MCF 10A (cell line): ENCODE measurements at regions of chr11 and their contacts with region 1.

Region 1: DNA sequence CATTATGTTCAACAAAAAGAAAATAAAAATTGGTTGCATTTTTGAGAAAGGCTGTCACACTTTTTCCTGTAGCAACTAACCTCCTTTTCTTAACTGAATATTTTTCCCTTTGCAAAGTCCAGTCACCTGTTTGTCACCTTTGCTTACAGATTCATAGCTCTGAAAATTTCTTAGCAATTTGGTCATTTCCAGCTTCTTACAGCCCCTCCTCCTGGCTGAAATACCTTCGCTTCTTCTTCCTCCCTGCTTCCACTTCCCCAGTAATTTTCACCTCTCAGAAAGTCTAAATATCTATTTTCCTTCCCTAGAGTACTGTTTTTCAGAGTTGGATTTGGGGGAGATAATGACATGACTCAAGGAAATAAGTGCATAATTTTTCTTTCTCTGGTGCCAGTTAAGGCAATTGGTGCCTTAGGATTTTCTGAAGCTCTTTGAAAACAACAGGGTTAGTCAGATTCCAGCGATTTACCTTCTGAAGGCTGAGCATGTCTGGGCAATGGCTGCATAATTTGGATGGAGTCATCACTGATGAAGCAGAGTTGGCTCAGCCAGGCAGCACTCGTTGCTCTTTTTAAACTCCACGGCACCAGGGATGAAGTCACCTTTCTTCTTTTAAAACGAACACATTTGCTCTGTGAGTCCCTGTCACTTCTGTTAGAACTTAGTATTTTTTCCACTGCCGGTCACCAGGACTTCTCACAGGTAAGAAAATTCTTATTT is 62.1 kb upstream of the AMOTL1 start:
- DNase-seq: peak; percentile 83
- H3K4me3 Mint-ChIP-seq: peak overlapping the region; percentile 81
- H3K27ac Mint-ChIP-seq: peak overlapping the region; percentile 95
- H3K4me1 Mint-ChIP-seq: peaks cover 18% of the 10 kb centered on the region
- H3K27me3 Mint-ChIP-seq: no peaks in the 10 kb centered on the region
- CTCF ChIP-seq: no peak

Region 2: GRCh38 chr11:94649254-94649653 is 56.8 kb before region 1 on chr11:
- CTCF ChIA-PET with region 1: no interaction called
- POLR2A ChIA-PET with region 1: no interaction called
- intact Hi-C with region 1: no loop called
- DNase-seq: no peak
- H3K4me3 Mint-ChIP-seq: no peak overlapping the region
- H3K27ac Mint-ChIP-seq: no peak overlapping the region
- H3K4me1 Mint-ChIP-seq: peaks cover 10% of the 10 kb centered on the region
- H3K27me3 Mint-ChIP-seq: no peaks in the 10 kb centered on the region
- CTCF ChIP-seq: no peak

Region 3: GRCh38 chr11:94678236-94678635 is 27.8 kb before region 1 on chr11:
- CTCF ChIA-PET with region 1: interaction called, 6 read pairs
- POLR2A ChIA-PET with region 1: interaction called, 11 read pairs
- intact Hi-C with region 1: no loop called
- DNase-seq: peak; percentile 14
- H3K4me3 Mint-ChIP-seq: no peak overlapping the region
- H3K27ac Mint-ChIP-seq: no peak overlapping the region
- H3K4me1 Mint-ChIP-seq: peaks cover 36% of the 10 kb centered on the region
- H3K27me3 Mint-ChIP-seq: no peaks in the 10 kb centered on the region
- CTCF ChIP-seq: no peak

Region 4: GRCh38 chr11:94721565-94722292 is 15.7 kb after region 1 on chr11:
- CTCF ChIA-PET with region 1: interaction called, 3 read pairs
- POLR2A ChIA-PET with region 1: interaction called, 26 read pairs
- intact Hi-C with region 1: loop called (anchors 2 kb)
- DNase-seq: peak; percentile 31
- H3K4me3 Mint-ChIP-seq: no peak overlapping the region
- H3K27ac Mint-ChIP-seq: peak overlapping the region; percentile 5
- H3K4me1 Mint-ChIP-seq: peaks cover 26% of the 10 kb centered on the region
- H3K27me3 Mint-ChIP-seq: no peaks in the 10 kb centered on the region
- CTCF ChIP-seq: no peak

Region 5: DNA sequence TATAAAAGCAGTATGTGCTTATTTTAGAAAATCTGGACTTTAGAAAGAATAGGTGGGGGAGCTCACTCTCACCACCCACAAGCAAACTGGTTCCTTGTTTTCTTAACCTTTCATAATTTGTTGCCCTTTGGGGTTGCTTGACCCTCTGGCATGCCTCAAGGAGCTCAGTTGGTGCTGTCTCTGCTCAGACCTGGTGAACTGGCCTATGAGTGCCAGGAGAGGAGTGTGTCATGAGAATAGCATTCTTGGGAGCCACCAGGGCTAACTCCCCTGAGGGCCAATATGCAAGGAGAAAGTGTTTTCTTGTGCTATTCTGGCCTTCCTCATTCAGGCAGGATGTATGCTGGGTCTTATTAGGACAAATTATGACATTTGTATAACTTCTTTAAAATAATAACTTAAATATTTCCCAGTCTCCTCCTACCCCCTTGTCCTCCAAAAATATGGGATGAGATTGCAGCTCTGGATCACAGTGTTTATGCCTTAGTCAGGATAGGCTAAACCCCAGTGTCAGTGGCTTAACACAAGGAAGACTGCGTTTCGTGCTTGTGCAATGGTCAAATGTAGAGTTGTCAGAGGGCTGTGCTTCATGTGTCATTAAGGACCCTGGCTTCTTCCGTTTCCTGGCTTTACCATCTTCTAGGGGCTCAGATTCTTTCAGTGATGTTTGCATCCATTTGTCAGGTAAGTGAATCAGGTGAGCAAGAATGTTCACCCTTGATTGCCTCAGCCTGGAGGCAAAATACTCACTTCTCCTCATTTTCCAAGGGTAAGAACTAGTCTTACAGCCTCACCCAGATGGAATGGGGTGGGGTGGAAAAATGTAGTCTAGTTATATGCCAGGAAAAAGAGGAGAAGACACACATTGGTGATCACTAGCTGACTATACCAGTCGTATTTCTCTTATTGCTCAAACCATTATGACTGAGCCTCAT is 41.4 kb after region 1 on chr11:
- CTCF ChIA-PET with region 1: interaction called, 3 read pairs
- POLR2A ChIA-PET with region 1: interaction called, 27 read pairs
- intact Hi-C with region 1: loop called (anchors 2 kb)
- DNase-seq: peak; percentile 64
- H3K4me3 Mint-ChIP-seq: peak overlapping the region; percentile 2
- H3K27ac Mint-ChIP-seq: peak overlapping the region; percentile 95
- H3K4me1 Mint-ChIP-seq: peaks cover 59% of the 10 kb centered on the region
- H3K27me3 Mint-ChIP-seq: no peaks in the 10 kb centered on the region
- CTCF ChIP-seq: no peak

Region 6: DNA sequence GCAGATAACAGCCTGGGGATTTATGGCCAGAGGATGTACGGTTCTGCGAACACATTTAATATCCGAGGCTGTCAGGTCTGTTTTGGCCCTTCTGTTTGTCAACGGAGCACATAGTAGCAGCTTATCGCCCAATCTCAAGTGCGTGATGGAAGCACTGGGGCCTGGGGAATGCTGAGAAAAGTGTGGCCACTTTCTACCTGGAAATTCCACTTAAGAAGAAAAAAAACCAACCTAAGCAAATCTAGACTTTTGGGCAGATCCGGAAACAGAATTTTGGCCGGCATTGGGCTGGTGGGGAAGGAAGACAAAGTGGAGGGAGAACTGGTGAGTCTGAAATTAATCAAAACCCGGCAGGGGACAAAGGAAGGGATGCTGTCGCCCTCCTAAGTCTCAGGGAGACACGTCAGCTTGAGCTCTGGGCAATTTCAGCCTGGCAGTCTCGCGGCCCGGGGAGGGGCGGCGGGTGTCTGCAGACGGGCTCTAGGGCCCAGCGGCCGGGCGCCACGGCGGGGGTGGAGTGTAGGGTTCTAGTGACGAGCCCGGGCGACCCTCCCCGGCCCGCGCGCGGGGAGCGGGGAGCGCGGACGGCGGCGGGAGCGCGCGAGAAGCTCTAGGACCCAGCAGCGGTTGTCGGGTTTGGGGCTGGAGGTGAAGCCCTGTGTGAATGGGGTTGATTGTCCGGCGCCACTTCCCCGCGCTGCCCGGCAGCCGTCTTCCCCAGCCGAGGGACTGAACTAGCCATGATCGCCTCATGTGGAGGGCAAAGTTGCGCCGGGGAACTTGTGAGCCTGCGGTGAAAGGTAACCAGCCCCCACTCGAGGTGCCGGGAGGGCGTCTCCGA is 61.9 kb after region 1 on chr11 and contains the start of gene AMOTL1:
- CTCF ChIA-PET with region 1: interaction called, 4 read pairs
- POLR2A ChIA-PET with region 1: interaction called, 62 read pairs
- intact Hi-C with region 1: loop called (anchors 2 kb)
- DNase-seq: peak; percentile 83
- H3K4me3 Mint-ChIP-seq: peak within 1 kb of the TSS; percentile 89
- H3K27ac Mint-ChIP-seq: peak within 1 kb of the TSS; percentile 90
- H3K4me1 Mint-ChIP-seq: peaks cover 32% of the 10 kb centered on the region
- H3K27me3 Mint-ChIP-seq: no peaks in the 10 kb centered on the region
- CTCF ChIP-seq: no peak
- total RNA-seq, gene AMOTL1: 76.6 and 77.0 TPM in 2 replicates

Region 7: GRCh38 chr11:94786264-94787126 is 80.4 kb after region 1 on chr11:
- CTCF ChIA-PET with region 1: no interaction called
- POLR2A ChIA-PET with region 1: interaction called, 6 read pairs
- intact Hi-C with region 1: loop called (anchors 5 kb)
- DNase-seq: peak; percentile 56
- H3K4me3 Mint-ChIP-seq: no peak overlapping the region
- H3K27ac Mint-ChIP-seq: no peak overlapping the region
- H3K4me1 Mint-ChIP-seq: peaks cover 53% of the 10 kb centered on the region
- H3K27me3 Mint-ChIP-seq: no peaks in the 10 kb centered on the region
- CTCF ChIP-seq: peak; percentile 47

Region 8: DNA sequence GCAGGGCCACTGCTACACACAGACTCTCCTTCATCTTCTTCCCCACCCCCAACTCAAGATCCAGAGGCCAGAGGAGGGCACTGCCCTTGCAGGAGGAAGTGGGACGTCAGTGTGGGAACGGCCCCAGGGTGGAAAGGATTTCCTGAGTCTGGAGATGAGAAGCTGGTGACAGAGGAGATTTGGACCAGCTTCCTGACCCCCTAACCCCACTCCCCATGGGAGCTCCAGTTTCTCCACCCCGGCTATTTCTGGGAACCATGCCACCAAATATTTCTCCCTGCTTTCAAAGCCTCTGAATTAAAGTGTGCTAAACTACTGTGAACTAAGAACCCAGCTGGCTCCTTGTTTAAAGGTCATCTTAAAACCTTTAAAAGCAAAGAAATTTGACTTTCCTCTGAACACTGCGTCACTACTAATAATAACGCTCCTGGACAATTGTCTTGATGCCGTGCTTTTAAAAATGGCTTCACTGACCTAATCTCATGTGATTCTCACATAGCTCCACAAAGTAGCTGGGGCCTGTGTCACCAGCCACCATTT is 220.7 kb after region 1 on chr11:
- CTCF ChIA-PET with region 1: no interaction called
- POLR2A ChIA-PET with region 1: no interaction called
- intact Hi-C with region 1: no loop called
- DNase-seq: peak; percentile 38
- H3K4me3 Mint-ChIP-seq: no peak overlapping the region
- H3K27ac Mint-ChIP-seq: no peak overlapping the region
- H3K4me1 Mint-ChIP-seq: no peaks in the 10 kb centered on the region
- H3K27me3 Mint-ChIP-seq: no peaks in the 10 kb centered on the region
- CTCF ChIP-seq: no peak